ENCODE measurements at regions of chr6 and their contacts with region 1.

Region 1: DNA sequence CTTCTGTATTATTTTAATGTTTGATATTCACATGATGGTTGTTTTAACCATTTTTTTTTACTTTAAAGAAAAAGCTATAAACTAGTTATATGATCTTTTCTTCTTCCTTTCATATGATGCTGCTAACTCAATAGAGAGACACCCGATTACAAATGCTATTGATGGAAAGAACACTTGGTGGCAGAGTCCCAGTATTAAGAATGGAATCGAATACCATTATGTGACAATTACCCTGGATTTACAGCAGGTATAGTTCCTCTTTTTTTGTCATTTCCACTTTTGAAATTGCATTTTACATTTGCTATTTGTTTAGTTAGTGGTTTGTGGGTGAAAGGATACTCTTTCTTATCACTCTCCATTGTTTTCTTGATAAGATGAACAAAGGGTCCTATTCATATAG is 176.7 kb downstream of the LAMA2 start:
- DNase-seq: no peak
- H3K4me3 ChIP-seq: no peak overlapping the region
- H3K27ac ChIP-seq: no peak overlapping the region
- H3K4me1 ChIP-seq: peaks cover 1% of the 10 kb centered on the region
- H3K27me3 ChIP-seq: no peaks in the 10 kb centered on the region
- CTCF ChIP-seq: no peak
- EP300 ChIP-seq: no peak
- POLR2A ChIP-seq: no peak

Region 2: DNA sequence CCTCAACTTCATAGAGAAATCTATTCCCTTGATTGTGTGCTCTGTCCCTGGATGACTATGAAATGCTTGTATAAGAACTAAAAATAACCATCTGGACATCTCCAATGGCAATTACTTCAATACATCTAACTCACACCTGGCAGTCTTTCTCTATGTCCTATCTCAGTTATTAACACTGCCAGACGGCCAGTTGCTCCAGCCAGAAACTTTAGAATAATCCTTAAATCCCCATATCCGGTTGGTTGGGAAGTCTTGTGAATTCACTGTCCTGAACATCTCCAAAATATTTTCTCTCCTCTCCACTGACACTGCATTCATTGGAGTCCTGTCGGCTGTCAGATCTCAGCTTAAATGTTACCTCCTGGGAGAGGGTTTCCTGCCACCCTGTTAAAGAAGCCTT is 188.9 kb before region 1 on chr6:
- intact Hi-C with region 1: loop called in 1 of 4 experiments (anchors 5 kb)
- DNase-seq: no peak
- H3K4me3 ChIP-seq: no peak overlapping the region
- H3K27ac ChIP-seq: no peak overlapping the region
- H3K4me1 ChIP-seq: no peaks in the 10 kb centered on the region
- H3K27me3 ChIP-seq: no peaks in the 10 kb centered on the region
- CTCF ChIP-seq: no peak
- EP300 ChIP-seq: no peak
- POLR2A ChIP-seq: no peak

Measured in ovary (tissue), 10 donors.